Heart right ventricle (tissue), 16 donors: ENCODE measurements at regions of chr3 and their contacts with region 1.

Region 1: GRCh38 chr3:138834359-138835212 is at the start of gene PIK3CB:
- DNase-seq: peak; percentile 91 to 94
- ATAC-seq: peak; percentile 97 to 100 (median 98)
- H3K4me3 ChIP-seq: peak within 1 kb of the TSS; percentile 70 to 99 (median 88)
- H3K27ac ChIP-seq: peak within 1 kb of the TSS; percentile 81 to 96 (median 94)
- H3K4me1 ChIP-seq: peaks cover 5 to 23% (median 14%) of the 10 kb centered on the region in 9 donors
- H3K27me3 ChIP-seq: no peaks in the 10 kb centered on the region
- CTCF ChIP-seq: peak in 6 of 9 donors; percentile 9 to 57 (median 44)
- total RNA-seq, gene PIK3CB: 26.2 to 45.7 (median 29.8) TPM

Region 2: GRCh38 chr3:138694287-138695007 is 140.1 kb before region 1 on chr3:
- intact Hi-C with region 1: loop called in 1 of 10 experiments (anchors 10 kb)
- DNase-seq: no peak
- ATAC-seq: no peak
- H3K4me3 ChIP-seq: no peak overlapping the region
- H3K27ac ChIP-seq: no peak overlapping the region
- H3K4me1 ChIP-seq: peaks cover 0 to 4% (median 0%) of the 10 kb centered on the region in 9 donors
- H3K27me3 ChIP-seq: no peaks in the 10 kb centered on the region
- CTCF ChIP-seq: no peak

Region 3: DNA sequence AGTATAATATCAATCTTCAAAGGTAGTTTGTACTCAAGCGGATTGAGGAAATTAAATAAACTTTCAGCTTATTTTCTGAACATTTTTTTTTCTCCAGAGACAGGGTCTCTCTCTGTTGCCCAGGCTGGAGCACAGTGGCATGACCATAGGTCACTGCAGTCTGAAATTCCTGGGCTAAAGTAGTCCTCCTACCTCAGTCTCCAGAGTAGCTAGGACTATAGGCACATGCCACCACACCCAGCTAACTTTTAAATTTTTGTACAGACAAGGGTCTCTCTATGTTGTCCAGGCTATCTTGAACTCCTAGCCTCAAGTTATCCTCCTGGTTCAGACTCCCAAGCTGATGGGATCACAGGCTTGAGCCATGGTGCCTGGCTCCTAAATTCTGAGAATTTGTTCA is 128.9 kb before region 1 on chr3:
- intact Hi-C with region 1: loop called in 1 of 10 experiments (anchors 10 kb)
- DNase-seq: no peak
- ATAC-seq: no peak
- H3K4me3 ChIP-seq: no peak overlapping the region
- H3K27ac ChIP-seq: no peak overlapping the region
- H3K4me1 ChIP-seq: no peaks in the 10 kb centered on the region
- H3K27me3 ChIP-seq: no peaks in the 10 kb centered on the region
- CTCF ChIP-seq: no peak

Region 4: DNA sequence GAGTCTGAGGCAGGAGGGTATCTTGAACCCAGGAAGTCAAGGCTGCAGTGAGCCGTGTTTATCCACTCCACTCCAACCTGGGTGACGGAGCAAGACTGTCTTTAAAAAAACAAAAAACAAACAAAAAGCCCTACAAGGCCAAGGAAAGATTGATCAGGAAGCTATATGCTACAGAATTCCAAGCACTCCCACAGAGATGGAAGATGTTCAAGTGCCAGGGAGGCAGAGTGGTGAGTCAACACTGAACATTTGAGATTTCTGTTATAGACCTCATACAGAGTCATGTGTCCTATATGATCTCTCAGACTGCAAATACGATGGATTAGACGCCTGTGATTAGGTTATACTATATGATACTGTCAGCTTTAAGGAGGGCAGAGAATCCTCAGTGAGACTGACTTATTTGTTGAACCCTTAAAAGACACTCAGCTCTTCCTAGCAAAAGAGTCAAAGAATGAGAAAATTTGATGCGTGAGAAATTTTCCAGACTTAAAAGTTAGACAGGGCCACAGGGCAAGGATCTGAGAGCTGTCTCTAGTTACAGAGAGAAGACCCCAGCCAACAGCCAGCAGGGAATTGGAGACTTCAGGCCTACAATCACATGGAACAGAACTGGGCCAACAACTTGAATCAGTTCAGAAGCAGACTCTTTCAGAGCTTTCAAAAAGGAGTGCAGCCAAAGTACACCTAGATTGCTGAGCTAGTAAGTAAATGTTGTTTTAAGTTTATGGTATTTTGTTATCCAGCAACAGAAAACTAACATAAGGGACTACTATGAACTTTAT is 107.4 kb before region 1 on chr3:
- intact Hi-C with region 1: loop called in 3 of 10 experiments (anchors 10 kb)
- DNase-seq: no peak
- ATAC-seq: no peak
- H3K4me3 ChIP-seq: no peak overlapping the region
- H3K27ac ChIP-seq: no peak overlapping the region
- H3K4me1 ChIP-seq: peaks cover 0 to 18% (median 11%) of the 10 kb centered on the region in 9 donors
- H3K27me3 ChIP-seq: no peaks in the 10 kb centered on the region
- CTCF ChIP-seq: no peak

Region 5: GRCh38 chr3:138774529-138775253 is 59.9 kb before region 1 on chr3:
- intact Hi-C with region 1: loop called in 1 of 10 experiments (anchors 5 kb)
- DNase-seq: peak in 1 of 2 donors; percentile 81
- ATAC-seq: peak; percentile 79 to 97 (median 90)
- H3K4me3 ChIP-seq: no peak overlapping the region
- H3K27ac ChIP-seq: peak overlapping the region; percentile 5 to 84 (median 60)
- H3K4me1 ChIP-seq: peaks cover 13 to 40% (median 22%) of the 10 kb centered on the region in 9 donors
- H3K27me3 ChIP-seq: no peaks in the 10 kb centered on the region
- CTCF ChIP-seq: peak in 1 of 9 donors; percentile 8

Region 6: GRCh38 chr3:138898301-138898700 is 63.7 kb after region 1 on chr3:
- intact Hi-C with region 1: loop called in 1 of 10 experiments (anchors 5 kb)
- DNase-seq: peak in 1 of 2 donors; percentile 22
- ATAC-seq: peak; percentile 85 to 97 (median 92)
- H3K4me3 ChIP-seq: no peak overlapping the region
- H3K27ac ChIP-seq: peak overlapping the region; percentile 15 to 88 (median 72)
- H3K4me1 ChIP-seq: peaks cover 9 to 45% (median 28%) of the 10 kb centered on the region in 9 donors
- H3K27me3 ChIP-seq: no peaks in the 10 kb centered on the region
- CTCF ChIP-seq: no peak

Region 7: DNA sequence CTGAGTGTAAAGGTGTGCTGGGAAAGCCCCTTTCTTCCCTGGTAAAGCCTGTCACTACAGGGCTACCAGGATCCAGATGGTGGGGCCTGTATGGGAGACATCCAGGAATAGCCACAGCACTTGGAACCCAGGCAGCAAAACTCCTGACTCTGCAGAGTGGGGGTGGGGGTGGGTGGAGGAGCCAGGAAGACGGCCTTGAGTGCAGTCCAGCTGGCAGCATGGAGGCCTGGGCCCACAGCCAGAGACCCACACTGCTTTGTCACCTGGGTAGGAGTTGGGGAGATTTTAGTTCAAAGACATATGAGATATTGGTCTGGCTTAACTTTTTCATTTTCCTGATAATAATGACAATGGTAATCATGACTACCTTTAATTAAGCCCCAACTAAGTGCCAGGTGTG is 392.6 kb after region 1 on chr3:
- intact Hi-C with region 1: no loop called
- DNase-seq: peak; percentile 74 to 75
- ATAC-seq: peak; percentile 82 to 97 (median 92)
- H3K4me3 ChIP-seq: no peak overlapping the region
- H3K27ac ChIP-seq: peak overlapping the region in 3 of 10 donors; percentile 12 to 47 (median 45)
- H3K4me1 ChIP-seq: peaks cover 0 to 13% (median 6%) of the 10 kb centered on the region in 9 donors
- H3K27me3 ChIP-seq: peaks cover 0 to 4% (median 0%) of the 10 kb centered on the region in 7 donors
- CTCF ChIP-seq: no peak